Transverse colon (tissue), 4 donors: ENCODE measurements at regions of chr2 and their contacts with region 1.

Region 1: GRCh38 chr2:203814661-203815540 is 52.7 kb upstream of the CTLA4 start:
- DNase-seq: peak; percentile 71
- H3K4me3 ChIP-seq: no peak overlapping the region
- H3K27ac ChIP-seq: peak overlapping the region; percentile 64 to 70 (median 68)
- H3K4me1 ChIP-seq: peaks cover 10 to 59% (median 35%) of the 10 kb centered on the region in 4 donors
- H3K27me3 ChIP-seq: no peaks in the 10 kb centered on the region
- CTCF ChIP-seq: peak; percentile 69 to 91 (median 76)
- EP300 ChIP-seq: no peak
- POLR2A ChIP-seq: no peak

Region 2: DNA sequence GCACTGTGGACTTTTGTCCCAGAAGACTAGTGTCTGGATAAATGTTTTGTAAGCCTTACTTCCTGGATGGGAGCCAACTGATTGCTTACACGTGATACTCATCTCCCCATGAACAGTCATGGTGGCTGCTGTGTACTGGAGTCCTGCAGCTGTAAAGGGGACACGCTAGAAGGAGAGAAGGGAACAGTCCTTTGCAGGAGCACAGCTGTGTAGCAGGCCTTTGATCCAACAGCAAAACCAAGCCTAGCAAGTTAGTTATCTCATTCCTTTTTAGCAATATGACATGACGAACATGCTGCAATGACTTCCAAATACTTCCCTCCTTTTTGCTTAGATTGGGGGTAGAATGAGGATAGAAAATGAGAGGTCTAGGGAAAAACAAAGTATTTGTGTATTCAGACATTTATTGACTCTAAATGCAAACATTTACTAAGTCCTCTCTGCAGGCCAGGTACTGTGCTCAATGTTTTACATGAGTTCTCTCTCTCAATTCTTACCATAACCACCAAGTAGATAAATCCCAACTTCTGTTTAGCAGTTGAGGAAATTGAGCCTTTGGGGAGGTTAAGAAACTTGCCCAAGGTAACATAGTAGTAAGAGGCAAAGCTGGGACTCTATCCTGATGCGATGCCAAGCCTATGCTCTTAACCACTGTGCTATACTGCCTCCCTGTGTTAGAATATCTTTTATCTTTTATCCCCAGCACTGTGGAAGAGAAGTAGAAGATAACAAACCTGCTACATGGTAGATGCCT is 163.9 kb before region 1 on chr2:
- in situ Hi-C with region 1: loop called (anchors 10 to 25 kb)
- intact Hi-C with region 1: no loop called
- DNase-seq: peak; percentile 69
- H3K4me3 ChIP-seq: no peak overlapping the region
- H3K27ac ChIP-seq: peak overlapping the region; percentile 83 to 89 (median 86)
- H3K4me1 ChIP-seq: peaks cover 20 to 44% (median 36%) of the 10 kb centered on the region in 4 donors
- H3K27me3 ChIP-seq: no peaks in the 10 kb centered on the region
- CTCF ChIP-seq: peak; percentile 36 to 63 (median 44)
- EP300 ChIP-seq: no peak
- POLR2A ChIP-seq: no peak

Region 3: GRCh38 chr2:203909261-203909967 is 94.5 kb after region 1 on chr2:
- in situ Hi-C with region 1: no loop called
- intact Hi-C with region 1: loop called (anchors 10 kb)
- DNase-seq: peak; percentile 11
- H3K4me3 ChIP-seq: peak overlapping the region in 1 of 4 donors; percentile 25
- H3K27ac ChIP-seq: peak overlapping the region in 2 of 4 donors; percentile 19 to 44
- H3K4me1 ChIP-seq: peaks cover 0 to 20% (median 11%) of the 10 kb centered on the region in 4 donors
- H3K27me3 ChIP-seq: no peaks in the 10 kb centered on the region
- CTCF ChIP-seq: peak; percentile 64 to 78 (median 72)
- EP300 ChIP-seq: no peak
- POLR2A ChIP-seq: no peak

Region 4: DNA sequence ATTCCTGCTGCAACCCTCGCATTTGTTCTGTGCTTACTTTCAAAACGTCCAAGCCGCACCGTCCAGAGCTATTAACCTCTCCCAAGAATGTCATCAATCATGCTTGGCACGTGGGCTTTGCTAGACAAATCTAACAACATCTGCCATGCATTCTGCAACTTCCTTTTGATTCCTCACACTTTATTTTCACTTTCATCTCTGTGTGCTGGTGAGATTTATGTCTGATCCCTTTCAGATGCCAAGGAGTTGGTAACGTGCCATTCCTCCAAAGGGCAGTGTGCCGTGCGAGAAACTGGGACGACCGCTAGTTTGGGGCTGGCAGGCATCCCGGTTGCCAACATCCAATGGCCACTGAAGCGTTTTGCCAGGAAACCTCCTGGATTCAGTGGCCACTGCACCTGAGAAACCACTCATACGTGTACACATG is 500.3 kb after region 1 on chr2:
- in situ Hi-C with region 1: no loop called
- intact Hi-C with region 1: no loop called
- DNase-seq: peak; percentile 13
- H3K4me3 ChIP-seq: no peak overlapping the region
- H3K27ac ChIP-seq: no peak overlapping the region
- H3K4me1 ChIP-seq: no peaks in the 10 kb centered on the region
- H3K27me3 ChIP-seq: no peaks in the 10 kb centered on the region
- CTCF ChIP-seq: no peak
- EP300 ChIP-seq: no peak
- POLR2A ChIP-seq: no peak